ENCODE measurements at regions of chrX and their contacts with region 1.

Region 1: DNA sequence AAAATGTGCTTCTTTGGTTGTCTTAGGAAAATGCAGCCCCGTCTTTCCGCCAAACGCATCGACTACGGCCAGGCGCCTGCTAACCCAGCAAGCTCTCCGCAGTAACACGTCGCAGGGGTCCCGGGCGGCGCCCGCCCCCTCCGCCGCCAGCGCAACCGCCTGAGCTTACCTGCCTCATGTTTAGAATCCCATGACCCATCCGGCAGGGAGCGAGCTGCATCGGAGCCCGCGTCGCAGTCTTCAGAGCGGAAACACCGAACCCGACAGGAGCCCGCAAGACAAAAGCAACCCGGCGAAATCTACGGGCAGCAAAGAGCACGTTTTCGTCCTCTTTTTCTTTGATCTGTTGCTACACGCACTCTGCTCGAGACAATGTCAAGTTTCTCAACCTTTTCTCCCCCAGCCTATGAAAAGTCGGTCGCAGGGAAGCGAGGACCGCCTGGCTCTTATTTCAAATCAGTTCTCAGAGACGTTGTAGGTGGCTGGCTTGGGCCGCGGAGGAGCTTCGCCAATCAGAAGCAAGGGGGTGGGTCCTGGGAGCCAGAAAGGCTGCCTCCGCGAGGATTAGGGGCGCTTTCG is at the start of gene MID1:
- DNase-seq: peak; percentile 65

Region 2: DNA sequence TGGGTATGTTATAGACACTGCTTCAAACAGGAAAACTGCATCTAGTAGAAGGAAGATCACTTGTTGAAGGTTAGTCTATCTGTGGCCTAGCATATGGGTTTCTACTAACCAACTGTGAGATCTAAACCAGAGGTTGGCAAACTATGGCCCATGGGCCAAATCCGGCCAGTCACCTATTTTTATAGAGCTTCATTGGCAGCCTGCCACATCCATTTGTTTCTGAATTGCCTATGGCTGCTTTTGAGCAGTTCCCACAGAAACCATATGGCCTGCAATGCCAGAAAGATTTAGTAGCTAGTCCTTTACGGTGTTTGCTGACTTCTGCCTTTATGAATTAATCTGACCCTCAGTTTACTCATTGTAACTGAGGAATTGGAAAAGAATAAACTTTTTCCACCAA is 70.9 kb before region 1 on chrX:
- CTCF ChIA-PET with region 1: no interaction called
- POLR2A ChIA-PET with region 1: no interaction called
- DNase-seq: no peak

Region 3: DNA sequence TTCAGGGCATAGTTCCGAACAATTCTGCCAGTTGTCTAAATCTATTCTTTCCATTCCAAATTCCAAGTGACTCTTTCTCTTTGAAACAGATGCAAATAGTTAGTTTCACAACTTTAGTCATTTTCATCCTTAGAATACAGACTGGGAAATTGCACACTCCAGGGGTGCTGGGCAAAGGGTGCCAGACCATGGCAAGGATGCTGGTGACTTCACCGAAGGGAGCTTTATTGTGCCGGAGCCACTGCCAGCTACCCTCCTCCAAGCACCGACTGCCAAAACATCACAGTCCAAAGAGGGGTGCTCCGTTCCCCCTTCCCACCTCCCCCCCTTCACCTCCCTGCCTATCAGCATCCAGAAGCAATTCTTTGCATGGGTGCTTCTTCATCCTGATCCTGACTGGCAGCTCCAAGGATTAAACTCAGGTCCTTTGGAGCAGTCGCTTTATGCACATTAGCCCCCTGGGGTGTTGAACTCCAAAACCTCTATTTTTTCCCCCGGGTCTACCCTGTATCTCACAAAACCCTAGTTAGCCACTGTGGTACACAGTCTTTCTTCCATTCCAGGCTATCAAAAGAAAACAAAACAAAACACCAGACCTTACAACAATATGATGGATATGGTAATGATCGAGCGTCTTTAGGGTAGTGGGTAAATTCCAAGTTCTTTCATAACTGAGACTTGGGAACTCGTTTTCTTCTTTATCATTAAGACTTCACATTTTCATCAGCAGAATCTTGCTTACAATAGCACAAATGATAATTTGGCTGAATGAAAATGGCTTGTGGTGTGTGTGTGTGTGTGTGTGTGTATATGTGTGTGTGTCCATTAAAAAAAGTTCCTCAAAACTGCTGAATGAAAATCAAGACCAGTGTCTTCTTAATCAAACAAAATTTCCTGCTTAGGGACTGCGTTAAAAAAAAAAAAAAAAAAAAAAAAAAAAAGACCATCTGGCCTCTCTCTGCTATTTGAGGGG is 28.6 kb before region 1 on chrX:
- CTCF ChIA-PET with region 1: interaction called, 3 read pairs
- POLR2A ChIA-PET with region 1: interaction called, 14 read pairs
- DNase-seq: no peak

Region 4: GRCh38 chrX:10602626-10603025 is 17.6 kb before region 1 on chrX:
- CTCF ChIA-PET with region 1: interaction called, 6 read pairs
- POLR2A ChIA-PET with region 1: interaction called, 11 read pairs
- DNase-seq: no peak

Region 5: GRCh38 chrX:10636337-10636736 is 16.1 kb after region 1 on chrX:
- CTCF ChIA-PET with region 1: interaction called, 4 read pairs
- POLR2A ChIA-PET with region 1: interaction called, 44 read pairs
- DNase-seq: peak; percentile 48

Region 6: GRCh38 chrX:10685923-10686590 is 65.8 kb after region 1 on chrX:
- CTCF ChIA-PET with region 1: no interaction called
- POLR2A ChIA-PET with region 1: no interaction called
- DNase-seq: no peak

Region 7: DNA sequence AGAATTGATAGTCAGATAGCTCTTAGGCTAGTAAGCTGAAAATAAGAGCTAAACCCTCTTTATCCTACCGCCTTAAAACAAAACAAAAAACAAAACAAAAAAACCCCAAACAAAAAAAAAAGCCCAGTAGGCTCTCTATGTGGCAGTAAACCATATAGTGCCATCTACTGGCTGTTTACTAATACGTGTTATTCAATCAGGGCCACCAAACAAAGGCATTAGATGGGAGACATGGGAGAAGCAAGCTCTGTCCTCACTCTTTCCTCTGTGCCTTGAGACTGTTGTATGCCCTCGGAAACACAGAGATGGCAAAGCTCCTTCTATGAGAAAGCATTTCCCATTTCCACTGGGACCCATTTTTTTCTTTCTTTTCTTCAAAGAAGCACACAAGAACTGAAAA is 149.0 kb after region 1 on chrX:
- CTCF ChIA-PET with region 1: interaction called, 10 read pairs
- POLR2A ChIA-PET with region 1: interaction called, 6 read pairs
- DNase-seq: peak; percentile 46